ENCODE measurements at regions of chr11 and their contacts with region 1.

Region 1: GRCh38 chr11:20022363-20023081 is 137.8 kb downstream of the DBX1 start:
- DNase-seq: peak; percentile 79
- ATAC-seq: peak; percentile 75
- H3K4me3 ChIP-seq: peak overlapping the region; percentile 58 to 86 (median 80)
- H3K27ac ChIP-seq: peak overlapping the region; percentile 76
- H3K4me1 ChIP-seq: peaks cover 91% of the 10 kb centered on the region
- H3K27me3 ChIP-seq: no peaks in the 10 kb centered on the region; a peak in 1 of 5 replicates
- CTCF ChIP-seq: no peak
- EP300 ChIP-seq: no peak
- POLR2A ChIP-seq: 0 out of 4 replicates have a peak, but pooled peaks of 1 of the 2 experiments have one; percentile 29
- RAD21 ChIP-seq: no peak

Region 2: DNA sequence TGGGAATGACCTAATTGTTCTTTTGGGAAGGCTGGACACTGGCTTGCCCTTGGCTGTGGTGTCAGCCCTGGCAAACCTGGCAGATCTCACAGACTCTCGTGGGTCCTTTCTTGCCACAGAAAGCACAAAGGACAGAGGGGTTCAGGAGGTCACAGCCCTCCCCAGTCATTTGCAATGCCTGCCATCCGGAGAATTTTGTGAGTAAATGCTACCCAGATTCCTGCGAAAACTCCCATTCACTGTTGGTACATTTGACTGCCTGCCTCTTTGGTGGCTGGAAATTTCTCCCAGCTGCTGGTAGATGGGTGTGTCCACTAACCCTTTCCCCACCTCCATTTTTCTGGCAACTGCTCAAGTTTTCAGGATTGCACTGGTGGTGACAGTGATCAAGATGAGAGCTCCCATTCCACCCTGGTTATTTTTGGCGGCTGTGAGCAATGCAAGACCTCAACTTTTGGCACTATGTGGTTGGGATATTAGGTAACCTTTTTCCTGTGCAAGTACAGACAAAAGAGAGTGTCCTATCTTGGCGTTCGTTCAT is 154.2 kb before region 1 on chr11:
- CTCF ChIA-PET with region 1: no interaction called
- POLR2A ChIA-PET with region 1: no interaction called
- in situ Hi-C with region 1: no loop called
- intact Hi-C with region 1: no loop called
- DNase-seq: no peak
- ATAC-seq: no peak
- H3K4me3 ChIP-seq: no peak overlapping the region
- H3K27ac ChIP-seq: no peak overlapping the region
- H3K4me1 ChIP-seq: peaks cover 10% of the 10 kb centered on the region
- H3K27me3 ChIP-seq: peaks cover 0 to 17% of the 10 kb centered on the region in 2 experiments; a peak in 2 of 5 replicates
- CTCF ChIP-seq: no peak
- EP300 ChIP-seq: no peak
- POLR2A ChIP-seq: no peak
- RAD21 ChIP-seq: no peak

Region 3: GRCh38 chr11:19912958-19913892 is 109.3 kb before region 1 on chr11:
- CTCF ChIA-PET with region 1: no interaction called
- POLR2A ChIA-PET with region 1: interaction called, 3 read pairs
- in situ Hi-C with region 1: no loop called
- intact Hi-C with region 1: loop called (anchors 5 kb)
- DNase-seq: peak; percentile 36
- ATAC-seq: peak; percentile 59
- H3K4me3 ChIP-seq: peak overlapping the region; percentile 29 to 47 (median 47); a peak in 5 of 6 replicates
- H3K27ac ChIP-seq: peak overlapping the region; percentile 93
- H3K4me1 ChIP-seq: peaks cover 81% of the 10 kb centered on the region
- H3K27me3 ChIP-seq: no peaks in the 10 kb centered on the region
- CTCF ChIP-seq: no peak
- EP300 ChIP-seq: no peak
- POLR2A ChIP-seq: no peak
- RAD21 ChIP-seq: no peak

Region 4: GRCh38 chr11:20000351-20001134 is 22.0 kb before region 1 on chr11:
- CTCF ChIA-PET with region 1: no interaction called
- POLR2A ChIA-PET with region 1: interaction called, 48 read pairs
- in situ Hi-C with region 1: no loop called
- intact Hi-C with region 1: loop called (anchors 1 kb)
- DNase-seq: peak; percentile 88
- ATAC-seq: peak; percentile 74
- H3K4me3 ChIP-seq: peak overlapping the region; percentile 18 to 65 (median 28); a peak in 5 of 6 replicates
- H3K27ac ChIP-seq: peak overlapping the region; percentile 86
- H3K4me1 ChIP-seq: peaks cover 75% of the 10 kb centered on the region
- H3K27me3 ChIP-seq: no peaks in the 10 kb centered on the region
- CTCF ChIP-seq: peak; percentile 28; the same call in 1 of the 2 replicates
- EP300 ChIP-seq: peak in 1 of 2 experiments; percentile 68; a peak in 2 of 4 replicates
- POLR2A ChIP-seq: peak; percentile 38 to 55; a peak in 2 of 4 replicates
- RAD21 ChIP-seq: peak; percentile 22; the same call in 1 of the 2 replicates

Region 5: GRCh38 chr11:20089796-20090653 is 67.5 kb after region 1 on chr11:
- CTCF ChIA-PET with region 1: no interaction called
- POLR2A ChIA-PET with region 1: no interaction called
- in situ Hi-C with region 1: no loop called
- intact Hi-C with region 1: loop called (anchors 5 kb)
- DNase-seq: peak; percentile 32
- ATAC-seq: no peak
- H3K4me3 ChIP-seq: no peak overlapping the region
- H3K27ac ChIP-seq: peak overlapping the region; percentile 20
- H3K4me1 ChIP-seq: peaks cover 41% of the 10 kb centered on the region
- H3K27me3 ChIP-seq: no peaks in the 10 kb centered on the region
- CTCF ChIP-seq: no peak
- EP300 ChIP-seq: no peak
- POLR2A ChIP-seq: no peak
- RAD21 ChIP-seq: no peak

Region 6: GRCh38 chr11:20226933-20227332 is 204.4 kb after region 1 on chr11:
- CTCF ChIA-PET with region 1: no interaction called
- POLR2A ChIA-PET with region 1: no interaction called
- in situ Hi-C with region 1: no loop called
- intact Hi-C with region 1: no loop called
- DNase-seq: no peak
- ATAC-seq: no peak
- H3K4me3 ChIP-seq: no peak overlapping the region
- H3K27ac ChIP-seq: no peak overlapping the region
- H3K4me1 ChIP-seq: no peaks in the 10 kb centered on the region
- H3K27me3 ChIP-seq: no peaks in the 10 kb centered on the region
- CTCF ChIP-seq: no peak
- EP300 ChIP-seq: no peak
- POLR2A ChIP-seq: no peak
- RAD21 ChIP-seq: no peak

Measured in HepG2 (cell line).